Activated T-helper 1 cell treated with anti-CD3 and anti-CD28 coated beads, Interleukin-12 subunit alpha, Interleukin-12 subunit beta, Interleukin-2, Interleukin-4 antibody, amounts not matched to agents 30 ng/mL and 10 ng/mL and 1 ng/mL, durations not matched to agents 14 hours and 24 hours and 36 hours (primary cell): ENCODE measurements at regions of chrX and their contacts with region 1.

Region 1: DNA sequence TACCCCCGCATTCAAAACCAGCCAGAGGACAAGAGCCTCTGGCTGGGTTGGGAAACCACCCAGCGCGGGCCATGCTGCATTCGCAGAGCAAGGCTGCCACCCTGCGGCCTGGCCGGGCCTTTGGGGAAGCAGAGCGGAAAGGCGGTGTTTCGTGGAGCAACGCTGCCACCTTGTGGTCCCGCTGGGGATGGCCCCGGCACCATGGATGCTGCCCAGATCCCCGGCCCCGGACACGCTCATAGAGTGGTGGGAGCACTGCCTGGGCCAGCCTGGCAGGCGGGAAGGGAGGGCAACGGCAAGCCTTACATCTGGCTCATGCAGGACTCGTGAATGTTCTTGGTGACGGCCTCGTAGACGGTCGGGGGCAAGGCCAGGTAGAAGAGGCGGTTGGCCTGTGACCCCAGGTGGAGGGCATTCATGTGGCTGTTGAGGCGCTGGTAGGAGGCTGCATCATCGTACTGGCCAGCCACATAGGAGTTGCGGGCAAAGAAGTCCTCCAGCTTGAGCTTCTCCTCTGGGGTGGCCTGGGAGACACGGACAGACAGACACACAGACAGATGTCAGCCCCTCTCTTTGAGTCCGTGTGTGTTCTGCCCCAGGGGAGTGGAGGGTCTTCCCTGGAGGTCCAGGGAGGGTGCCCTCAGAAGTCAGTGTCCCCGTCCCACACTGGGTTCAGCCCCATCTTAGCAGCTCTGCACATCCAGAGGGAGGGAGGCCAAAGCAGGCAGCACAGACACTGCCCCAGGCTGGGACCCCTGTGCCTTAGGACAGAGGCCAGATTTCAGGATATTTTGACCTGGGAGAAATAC is 11.6 kb downstream of the G6PD start:
- DNase-seq: peak; percentile 80
- H3K4me3 Mint-ChIP-seq: no peak overlapping the region
- H3K27ac Mint-ChIP-seq: no peak overlapping the region
- H3K4me1 Mint-ChIP-seq: peaks cover 6% of the 10 kb centered on the region
- H3K27me3 Mint-ChIP-seq: no peaks in the 10 kb centered on the region

Region 2: DNA sequence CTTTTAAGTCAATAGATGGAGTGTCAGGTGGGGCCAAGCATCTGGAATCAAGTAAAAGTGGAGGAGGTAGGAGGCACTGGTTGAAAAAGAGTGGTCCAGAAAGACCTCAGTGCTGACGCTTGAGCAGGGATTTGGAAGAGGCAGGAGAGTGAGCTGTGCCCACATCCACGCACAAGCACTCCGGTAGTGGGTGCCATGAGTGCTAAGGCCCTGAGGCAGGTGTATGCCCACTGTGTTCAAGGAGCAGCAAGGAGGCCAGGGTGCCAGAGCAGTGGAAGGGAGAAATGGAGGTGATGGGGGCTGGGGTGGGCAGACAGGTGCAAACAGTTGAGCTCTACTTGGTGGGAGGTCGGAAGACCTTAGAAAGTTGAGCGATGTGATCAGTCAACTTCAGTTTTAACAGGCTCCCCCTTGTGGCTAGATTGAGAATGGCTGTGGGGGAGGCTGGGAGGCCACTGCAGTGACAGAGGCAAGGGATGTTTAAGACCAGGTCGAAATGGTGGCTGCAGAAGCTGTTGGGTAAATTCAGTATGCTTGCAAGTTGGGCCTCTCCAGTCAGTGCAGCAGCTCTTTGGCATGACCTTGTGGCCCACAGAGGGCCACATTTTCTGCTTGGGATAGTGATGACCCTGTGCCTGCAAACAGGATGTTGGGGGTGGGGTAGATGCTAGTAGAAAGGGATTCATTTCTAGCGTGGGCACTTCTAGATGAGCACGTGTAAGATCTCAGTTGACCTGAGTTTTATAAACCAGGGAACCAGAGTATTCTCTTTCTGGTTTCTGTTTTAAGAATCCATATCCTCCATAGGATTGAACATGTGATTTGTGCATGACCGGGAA is 226.7 kb before region 1 on chrX:
- intact Hi-C with region 1: loop called (anchors 1 kb)
- DNase-seq: peak; percentile 66
- H3K4me3 Mint-ChIP-seq: no peak overlapping the region
- H3K27ac Mint-ChIP-seq: peak overlapping the region; percentile 44
- H3K4me1 Mint-ChIP-seq: peaks cover 47% of the 10 kb centered on the region
- H3K27me3 Mint-ChIP-seq: peaks cover 2% of the 10 kb centered on the region

Region 3: GRCh38 chrX:154370882-154371770 is 163.9 kb before region 1 on chrX:
- intact Hi-C with region 1: loop called (anchors 1 kb)
- DNase-seq: peak; percentile 88
- H3K4me3 Mint-ChIP-seq: peak overlapping the region; percentile 84
- H3K27ac Mint-ChIP-seq: peak overlapping the region; percentile 63
- H3K4me1 Mint-ChIP-seq: peaks cover 11% of the 10 kb centered on the region
- H3K27me3 Mint-ChIP-seq: no peaks in the 10 kb centered on the region

Region 4: GRCh38 chrX:154397819-154398724 is 137.0 kb before region 1 on chrX and contains the start of gene RPL10:
- intact Hi-C with region 1: loop called (anchors 5 kb)
- DNase-seq: peak; percentile 91
- H3K4me3 Mint-ChIP-seq: peak within 1 kb of the TSS; percentile 98
- H3K27ac Mint-ChIP-seq: peak within 1 kb of the TSS; percentile 99
- H3K4me1 Mint-ChIP-seq: peaks cover 8% of the 10 kb centered on the region
- H3K27me3 Mint-ChIP-seq: no peaks in the 10 kb centered on the region
- total RNA-seq, gene RPL10: 2,208 and 2,261 TPM in 2 replicates

Region 5: GRCh38 chrX:154411322-154411980 is 123.6 kb before region 1 on chrX and contains the start of gene TAFAZZIN:
- intact Hi-C with region 1: loop called (anchors 1 kb)
- DNase-seq: peak; percentile 74
- H3K4me3 Mint-ChIP-seq: peak within 1 kb of the TSS; percentile 93
- H3K27ac Mint-ChIP-seq: peak within 1 kb of the TSS; percentile 94
- H3K4me1 Mint-ChIP-seq: peaks cover 12% of the 10 kb centered on the region
- H3K27me3 Mint-ChIP-seq: no peaks in the 10 kb centered on the region
- total RNA-seq, gene TAFAZZIN: 65.2 and 69.2 TPM in 2 replicates